ENCODE measurements at regions of chr9 and their contacts with region 1.

Region 1: GRCh38 chr9:125241000-125241862 is at the start of gene HSPA5:
- DNase-seq: peak; percentile 100
- ATAC-seq: peak; percentile 89
- H3K4me3 ChIP-seq: peak within 1 kb of the TSS; percentile 80
- H3K27ac ChIP-seq: peak within 1 kb of the TSS; percentile 98
- H3K4me1 ChIP-seq: peaks cover 4% of the 10 kb centered on the region
- H3K27me3 ChIP-seq: no peaks in the 10 kb centered on the region
- CTCF ChIP-seq: no peak
- POLR2A ChIP-seq: peak; percentile 99
- RAD21 ChIP-seq: no peak
- total RNA-seq, gene HSPA5: 118 and 147 TPM in 2 replicates

Region 2: DNA sequence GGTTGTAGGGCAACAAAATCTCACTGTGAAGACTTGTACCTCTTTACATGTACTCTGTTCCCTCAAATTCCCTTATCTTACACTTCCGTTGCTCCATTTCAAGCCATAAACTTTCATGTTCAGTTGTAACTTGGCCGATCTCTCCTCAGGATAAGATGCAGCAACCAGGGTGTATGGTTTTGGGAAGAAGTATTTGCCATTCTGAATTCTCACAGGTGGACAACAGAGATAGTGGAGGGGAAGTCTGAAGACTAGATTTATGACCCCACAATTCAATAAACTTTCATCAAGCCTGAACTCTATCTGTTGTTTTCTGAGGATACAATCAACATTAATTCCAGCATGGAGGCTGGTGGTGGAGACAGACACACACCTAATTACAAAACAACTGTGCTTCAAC is 327.9 kb before region 1 on chr9:
- CTCF ChIA-PET with region 1: no interaction called
- POLR2A ChIA-PET with region 1: interaction called, 14 read pairs
- dilution Hi-C with region 1: no loop called
- in situ Hi-C with region 1: no loop called
- intact Hi-C with region 1: no loop called
- DNase-seq: no peak
- ATAC-seq: no peak
- H3K4me3 ChIP-seq: no peak overlapping the region
- H3K27ac ChIP-seq: no peak overlapping the region
- H3K4me1 ChIP-seq: no peaks in the 10 kb centered on the region
- H3K27me3 ChIP-seq: no peaks in the 10 kb centered on the region
- CTCF ChIP-seq: no peak
- POLR2A ChIP-seq: no peak
- RAD21 ChIP-seq: no peak

Region 3: DNA sequence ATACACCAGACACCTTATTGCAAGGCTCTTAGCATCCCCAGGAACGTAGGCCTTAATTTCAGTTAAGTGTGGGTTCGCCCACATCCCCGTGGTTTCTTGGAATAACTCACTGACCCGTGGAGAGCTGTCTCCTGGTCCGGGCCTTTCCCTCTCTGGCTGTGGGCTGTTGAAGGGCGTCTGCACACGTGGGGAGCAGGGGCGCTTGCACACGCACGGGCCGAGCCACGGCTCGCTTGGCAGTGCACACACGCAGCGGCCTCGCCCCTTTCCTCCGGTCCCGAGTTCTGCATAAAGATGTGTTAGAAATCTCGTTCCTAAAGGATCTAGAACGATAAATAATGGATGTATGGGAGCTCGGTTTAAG is 647.9 kb after region 1 on chr9:
- CTCF ChIA-PET with region 1: no interaction called
- POLR2A ChIA-PET with region 1: no interaction called
- dilution Hi-C with region 1: no loop called
- in situ Hi-C with region 1: no loop called
- intact Hi-C with region 1: no loop called
- DNase-seq: peak; percentile 3
- ATAC-seq: peak; percentile 5
- H3K4me3 ChIP-seq: peak overlapping the region; percentile 94
- H3K27ac ChIP-seq: no peak overlapping the region
- H3K4me1 ChIP-seq: peaks cover 8% of the 10 kb centered on the region
- H3K27me3 ChIP-seq: no peaks in the 10 kb centered on the region
- CTCF ChIP-seq: no peak
- POLR2A ChIP-seq: no peak
- RAD21 ChIP-seq: no peak